CD4-positive, alpha-beta memory T cell (primary cell): ENCODE measurements at regions of chr11 and their contacts with region 1.

Region 1: DNA sequence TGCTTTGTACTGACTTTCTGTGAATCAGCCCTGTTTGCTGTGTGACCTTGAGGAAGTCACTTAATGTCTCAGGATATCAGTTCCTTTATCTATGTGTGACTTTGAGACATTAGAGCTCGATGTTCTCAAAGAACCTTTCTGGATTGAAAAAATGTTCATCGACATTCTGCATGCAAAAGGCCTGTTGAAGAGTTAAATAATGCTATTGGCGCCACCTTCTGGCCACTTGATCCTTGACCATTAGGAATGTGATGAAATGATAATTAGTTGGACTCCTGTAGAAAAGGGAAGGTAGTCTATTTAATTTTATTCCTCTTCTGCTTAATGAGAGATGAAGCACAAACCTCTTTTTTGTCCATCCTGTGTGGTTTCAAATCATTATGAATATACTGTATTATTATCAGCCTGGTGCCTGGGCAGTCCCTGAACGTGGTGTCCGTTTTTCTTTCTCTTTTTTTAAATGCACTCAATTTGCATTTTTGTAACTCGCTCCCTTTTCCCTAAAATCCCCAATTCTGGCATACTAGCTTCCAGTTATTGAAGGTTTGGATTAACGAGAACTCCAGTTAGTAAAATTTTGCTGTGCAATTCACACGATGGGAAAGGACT is 20.7 kb downstream of the ELF5 start:
- DNase-seq: peak in 4 of 5 donors; percentile 8 to 15 (median 12)
- H3K4me3 ChIP-seq: no peak overlapping the region
- H3K4me3 Mint-ChIP-seq: no peak overlapping the region
- H3K27ac ChIP-seq: no peak overlapping the region
- H3K27ac Mint-ChIP-seq: no peak overlapping the region
- H3K4me1 ChIP-seq: no peaks in the 10 kb centered on the region
- H3K4me1 Mint-ChIP-seq: no peaks in the 10 kb centered on the region
- H3K27me3 ChIP-seq: no peaks in the 10 kb centered on the region
- H3K27me3 Mint-ChIP-seq: peaks cover 4 to 6% of the 10 kb centered on the region in 2 donors

Region 2: GRCh38 chr11:33857933-33858371 is 635.0 kb before region 1 on chr11:
- CTCF ChIA-PET with region 1: interaction called, 3 read pairs
- POLR2A ChIA-PET with region 1: no interaction called
- intact Hi-C with region 1: loop called (anchors 2 kb)
- DNase-seq: peak; percentile 47 to 65 (median 54)
- H3K4me3 ChIP-seq: no peak overlapping the region
- H3K4me3 Mint-ChIP-seq: no peak overlapping the region
- H3K27ac ChIP-seq: no peak overlapping the region
- H3K27ac Mint-ChIP-seq: no peak overlapping the region
- H3K4me1 ChIP-seq: no peaks in the 10 kb centered on the region
- H3K4me1 Mint-ChIP-seq: no peaks in the 10 kb centered on the region
- H3K27me3 ChIP-seq: peaks cover 8% of the 10 kb centered on the region
- H3K27me3 Mint-ChIP-seq: peaks cover 33% of the 10 kb centered on the region in 2 donors

Region 3: GRCh38 chr11:33996498-33997454 is 496.1 kb before region 1 on chr11:
- CTCF ChIA-PET with region 1: interaction called, 3 read pairs
- POLR2A ChIA-PET with region 1: no interaction called
- intact Hi-C with region 1: loop called (anchors 1 kb)
- DNase-seq: peak; percentile 71 to 77 (median 72)
- H3K4me3 ChIP-seq: no peak overlapping the region
- H3K4me3 Mint-ChIP-seq: peak overlapping the region in 6 of 8 donors; percentile 4 to 73 (median 62)
- H3K27ac ChIP-seq: no peak overlapping the region
- H3K27ac Mint-ChIP-seq: no peak overlapping the region
- H3K4me1 ChIP-seq: peaks cover 8% of the 10 kb centered on the region
- H3K4me1 Mint-ChIP-seq: peaks cover 6 to 11% (median 7%) of the 10 kb centered on the region in 4 donors
- H3K27me3 ChIP-seq: no peaks in the 10 kb centered on the region
- H3K27me3 Mint-ChIP-seq: peaks cover 14 to 23% of the 10 kb centered on the region in 2 donors

Region 4: GRCh38 chr11:34366522-34366921 is 126.4 kb before region 1 on chr11:
- CTCF ChIA-PET with region 1: interaction called, 10 read pairs
- POLR2A ChIA-PET with region 1: no interaction called
- intact Hi-C with region 1: no loop called
- DNase-seq: no peak
- H3K4me3 ChIP-seq: no peak overlapping the region
- H3K4me3 Mint-ChIP-seq: no peak overlapping the region
- H3K27ac ChIP-seq: no peak overlapping the region
- H3K27ac Mint-ChIP-seq: no peak overlapping the region
- H3K4me1 ChIP-seq: no peaks in the 10 kb centered on the region
- H3K4me1 Mint-ChIP-seq: peaks cover 0 to 8% (median 3%) of the 10 kb centered on the region in 4 donors
- H3K27me3 ChIP-seq: peaks cover 4% of the 10 kb centered on the region
- H3K27me3 Mint-ChIP-seq: peaks cover 9 to 29% of the 10 kb centered on the region in 2 donors

Region 5: GRCh38 chr11:34395916-34396550 is 96.9 kb before region 1 on chr11:
- CTCF ChIA-PET with region 1: no interaction called
- POLR2A ChIA-PET with region 1: no interaction called
- intact Hi-C with region 1: no loop called
- DNase-seq: no peak
- H3K4me3 ChIP-seq: no peak overlapping the region
- H3K4me3 Mint-ChIP-seq: no peak overlapping the region
- H3K27ac ChIP-seq: no peak overlapping the region
- H3K27ac Mint-ChIP-seq: no peak overlapping the region
- H3K4me1 ChIP-seq: no peaks in the 10 kb centered on the region
- H3K4me1 Mint-ChIP-seq: no peaks in the 10 kb centered on the region
- H3K27me3 ChIP-seq: no peaks in the 10 kb centered on the region
- H3K27me3 Mint-ChIP-seq: peaks cover 17 to 37% of the 10 kb centered on the region in 2 donors

Region 6: DNA sequence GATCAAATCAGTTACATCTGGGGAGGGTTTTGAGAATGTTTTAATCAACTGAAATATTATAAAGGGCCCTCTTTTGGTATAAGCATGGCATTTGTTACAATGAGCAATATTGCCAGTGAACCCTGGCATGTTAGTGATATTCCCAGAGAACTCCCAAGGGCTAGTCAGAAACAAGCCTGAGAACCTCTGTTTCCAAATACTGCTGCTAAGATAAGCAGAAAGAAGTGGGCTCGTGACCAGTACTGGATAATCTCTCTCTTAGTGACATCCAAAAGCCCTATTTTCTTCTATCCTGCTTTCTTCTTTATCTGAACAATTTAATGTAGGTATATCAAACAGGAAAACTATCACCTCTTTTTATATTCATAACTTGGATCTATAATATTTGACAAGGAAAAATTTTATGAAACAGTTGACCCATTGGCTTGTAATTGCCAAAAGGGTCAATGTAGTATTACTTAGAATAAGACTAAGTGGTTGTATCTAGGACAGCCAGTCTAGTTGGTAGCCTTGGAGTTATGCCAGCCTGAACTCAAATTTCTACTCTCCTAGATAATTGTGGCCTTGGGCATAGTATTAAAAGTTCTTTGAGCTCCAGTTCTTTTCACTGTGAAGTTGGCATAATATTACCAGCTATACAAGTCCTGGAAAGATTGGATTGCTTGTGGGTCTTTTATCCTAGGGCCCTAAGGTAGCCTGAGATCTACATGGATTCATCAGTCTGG is 38.4 kb before region 1 on chr11:
- CTCF ChIA-PET with region 1: no interaction called
- POLR2A ChIA-PET with region 1: no interaction called
- intact Hi-C with region 1: no loop called
- DNase-seq: no peak
- H3K4me3 ChIP-seq: no peak overlapping the region
- H3K4me3 Mint-ChIP-seq: no peak overlapping the region
- H3K27ac ChIP-seq: no peak overlapping the region
- H3K27ac Mint-ChIP-seq: no peak overlapping the region
- H3K4me1 ChIP-seq: peaks cover under 1% of the 10 kb centered on the region
- H3K4me1 Mint-ChIP-seq: peaks cover 0 to 9% (median 5%) of the 10 kb centered on the region in 4 donors
- H3K27me3 ChIP-seq: no peaks in the 10 kb centered on the region
- H3K27me3 Mint-ChIP-seq: no peaks in the 10 kb centered on the region

Region 7: DNA sequence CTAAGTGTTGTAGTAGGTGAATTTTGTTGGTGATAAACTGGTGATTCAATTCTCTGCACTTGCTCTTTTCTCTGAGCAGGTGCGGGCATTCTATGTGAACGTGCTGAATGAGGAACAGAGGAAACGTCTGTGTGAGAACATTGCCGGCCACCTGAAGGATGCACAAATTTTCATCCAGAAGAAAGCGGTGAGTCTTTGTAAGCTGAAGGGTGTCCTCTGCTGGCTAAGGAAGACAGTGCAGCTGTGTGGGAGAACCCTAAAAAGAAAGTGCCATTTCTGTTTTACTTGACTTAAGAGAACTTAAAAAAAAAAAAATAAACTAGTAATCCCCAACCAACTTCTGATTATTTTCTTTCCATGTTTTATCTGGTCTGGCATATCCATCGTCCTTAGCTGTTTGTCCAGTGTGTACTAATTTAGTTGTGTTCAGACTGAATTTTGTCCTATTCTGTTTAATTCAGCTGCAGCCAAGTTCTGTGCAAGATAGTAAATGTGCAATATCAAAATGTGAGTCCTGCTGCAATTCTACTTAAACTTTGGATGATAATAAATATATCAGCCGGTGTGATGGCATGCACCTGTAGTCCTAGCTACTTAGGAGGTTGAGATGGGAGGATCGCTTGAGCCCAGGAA is 24.6 kb before region 1 on chr11:
- CTCF ChIA-PET with region 1: interaction called, 10 read pairs
- POLR2A ChIA-PET with region 1: no interaction called
- intact Hi-C with region 1: no loop called
- DNase-seq: peak in 4 of 5 donors; percentile 12 to 29 (median 28)
- H3K4me3 ChIP-seq: no peak overlapping the region
- H3K4me3 Mint-ChIP-seq: no peak overlapping the region
- H3K27ac ChIP-seq: no peak overlapping the region
- H3K27ac Mint-ChIP-seq: peak overlapping the region in 2 of 7 donors; percentile 25 to 77
- H3K4me1 ChIP-seq: peaks cover 5% of the 10 kb centered on the region
- H3K4me1 Mint-ChIP-seq: peaks cover 6 to 16% (median 9%) of the 10 kb centered on the region in 4 donors
- H3K27me3 ChIP-seq: no peaks in the 10 kb centered on the region
- H3K27me3 Mint-ChIP-seq: no peaks in the 10 kb centered on the region

Region 8: DNA sequence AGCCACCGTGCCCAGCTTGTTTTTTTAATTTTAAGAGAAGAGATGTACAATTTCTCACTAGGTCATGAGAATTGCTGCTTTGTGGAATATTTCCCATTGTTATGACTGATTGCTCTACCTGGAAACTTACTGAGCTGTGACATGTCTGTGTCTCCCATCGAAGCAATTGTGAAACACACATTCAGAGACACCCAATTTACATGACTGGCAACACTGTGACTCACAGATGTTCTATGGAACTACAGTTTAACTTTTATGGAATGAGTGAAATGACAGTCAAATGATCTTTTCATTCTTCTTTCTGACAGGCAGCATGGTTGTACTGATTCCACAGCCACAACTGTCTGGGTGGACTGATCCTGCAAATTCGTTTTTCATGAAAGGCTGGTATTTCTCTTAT is 11.6 kb before region 1 on chr11:
- CTCF ChIA-PET with region 1: interaction called, 12 read pairs
- POLR2A ChIA-PET with region 1: no interaction called
- intact Hi-C with region 1: no loop called
- DNase-seq: no peak
- H3K4me3 ChIP-seq: no peak overlapping the region
- H3K4me3 Mint-ChIP-seq: no peak overlapping the region
- H3K27ac ChIP-seq: no peak overlapping the region
- H3K27ac Mint-ChIP-seq: no peak overlapping the region
- H3K4me1 ChIP-seq: no peaks in the 10 kb centered on the region
- H3K4me1 Mint-ChIP-seq: no peaks in the 10 kb centered on the region
- H3K27me3 ChIP-seq: no peaks in the 10 kb centered on the region
- H3K27me3 Mint-ChIP-seq: peaks cover 3 to 7% of the 10 kb centered on the region in 2 donors